ENCODE measurements at regions of chr2 and their contacts with region 1.

Region 1: DNA sequence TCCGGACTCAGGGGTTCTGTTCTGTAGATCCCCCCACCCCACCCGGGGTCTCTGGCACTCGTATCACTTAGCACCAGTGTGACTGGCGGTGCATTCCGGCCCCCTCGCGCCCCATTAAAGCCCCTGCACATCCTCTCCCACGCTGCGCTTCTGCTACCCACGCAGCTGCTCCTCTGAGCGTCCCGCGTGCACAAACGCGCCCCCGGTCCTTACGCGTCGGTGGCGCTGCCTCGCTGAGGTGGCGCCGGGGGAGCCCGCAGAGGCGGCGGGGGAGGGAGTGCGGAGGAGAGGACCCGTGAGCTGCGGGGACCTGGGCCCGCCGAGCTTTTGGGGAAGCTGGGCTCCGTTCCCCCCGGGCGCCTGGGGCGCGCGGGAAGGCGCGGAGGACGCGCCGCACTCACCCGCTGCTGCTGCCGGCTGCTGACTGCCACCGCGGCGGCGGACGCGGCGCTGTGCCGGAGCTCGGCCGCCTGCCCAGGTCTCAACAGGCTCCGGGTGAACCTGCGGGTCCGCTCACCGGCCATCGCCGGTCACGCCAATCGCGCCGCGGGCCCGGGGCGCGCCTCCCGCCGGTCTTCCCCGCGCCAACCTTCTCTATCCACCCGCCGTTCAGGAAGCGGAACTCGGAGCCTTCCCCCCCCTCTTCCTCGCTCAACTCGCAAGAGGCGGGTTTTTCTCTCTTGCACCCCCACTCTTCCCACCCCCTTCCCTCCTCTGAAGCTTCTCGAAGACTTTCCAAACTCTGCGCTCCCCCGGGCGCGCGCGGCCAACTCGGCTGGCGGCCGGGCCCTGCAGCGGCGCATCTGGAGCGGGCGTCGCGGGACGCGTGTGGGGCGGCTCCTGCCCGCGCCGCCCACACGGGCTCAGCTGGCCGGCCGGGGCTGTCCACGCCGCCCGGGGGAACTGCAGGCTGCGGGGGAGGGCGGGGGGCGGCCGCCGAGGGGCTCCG is at the start of gene DOCK10:
- DNase-seq: peak; percentile 29
- H3K4me3 ChIP-seq: peak within 1 kb of the TSS; percentile 57 to 66 (median 58)
- H3K27ac ChIP-seq: no peak within 1 kb of the TSS
- H3K4me1 ChIP-seq: peaks cover 7% of the 10 kb centered on the region
- H3K27me3 ChIP-seq: peaks cover 4% of the 10 kb centered on the region
- CTCF ChIP-seq: no peak
- total RNA-seq, gene DOCK10: 0.50 to 5.1 TPM

Region 2: GRCh38 chr2:224832207-224832606 is 209.9 kb before region 1 on chr2:
- CTCF ChIA-PET with region 1: no interaction called
- dilution Hi-C with region 1: no loop called
- in situ Hi-C with region 1: no loop called
- intact Hi-C with region 1: no loop called
- DNase-seq: no peak
- H3K4me3 ChIP-seq: no peak overlapping the region
- H3K27ac ChIP-seq: no peak overlapping the region
- H3K4me1 ChIP-seq: peaks cover 3% of the 10 kb centered on the region
- H3K27me3 ChIP-seq: no peaks in the 10 kb centered on the region
- CTCF ChIP-seq: no peak

Region 3: GRCh38 chr2:225002039-225002655 is 40.0 kb before region 1 on chr2:
- CTCF ChIA-PET with region 1: no interaction called
- dilution Hi-C with region 1: no loop called
- in situ Hi-C with region 1: no loop called
- intact Hi-C with region 1: no loop called
- DNase-seq: peak; percentile 61
- H3K4me3 ChIP-seq: no peak overlapping the region
- H3K27ac ChIP-seq: no peak overlapping the region
- H3K4me1 ChIP-seq: peaks cover 15% of the 10 kb centered on the region
- H3K27me3 ChIP-seq: no peaks in the 10 kb centered on the region
- CTCF ChIP-seq: peak; percentile 82 to 87

Region 4: DNA sequence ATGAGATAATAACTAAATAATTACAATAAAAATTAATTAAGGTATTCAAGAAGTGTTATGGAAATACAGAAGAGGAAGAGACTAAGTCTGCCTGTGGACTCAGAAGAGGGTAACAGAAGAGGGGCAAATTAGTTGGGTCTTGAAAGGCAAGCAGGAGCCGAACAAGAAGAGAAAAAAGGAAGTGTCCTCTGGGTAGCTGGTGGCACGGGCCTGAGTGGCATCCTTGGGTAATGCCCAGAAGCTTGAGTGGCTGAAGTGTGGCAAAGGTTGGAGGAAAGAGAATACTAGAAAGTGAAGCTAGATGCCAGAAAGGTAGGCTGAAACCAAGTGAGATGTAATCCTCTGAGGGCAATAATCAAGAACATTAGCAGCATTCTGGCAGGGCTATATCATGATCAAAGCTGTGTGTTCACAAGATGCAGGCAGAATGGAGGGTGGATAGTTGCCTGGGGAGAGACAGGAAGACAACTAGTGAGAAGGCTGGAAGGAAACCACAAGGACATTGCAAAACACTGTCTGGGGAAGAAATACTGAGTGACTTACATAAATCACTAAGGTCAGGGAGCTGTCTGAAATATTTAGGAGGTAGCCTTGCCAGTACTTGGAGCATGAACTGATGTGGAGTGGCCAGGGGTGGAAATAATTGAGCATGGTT is 16.1 kb before region 1 on chr2:
- CTCF ChIA-PET with region 1: no interaction called
- dilution Hi-C with region 1: no loop called
- in situ Hi-C with region 1: no loop called
- intact Hi-C with region 1: no loop called
- DNase-seq: peak; percentile 71
- H3K4me3 ChIP-seq: no peak overlapping the region
- H3K27ac ChIP-seq: no peak overlapping the region
- H3K4me1 ChIP-seq: peaks cover 9% of the 10 kb centered on the region
- H3K27me3 ChIP-seq: no peaks in the 10 kb centered on the region
- CTCF ChIP-seq: no peak

Region 5: DNA sequence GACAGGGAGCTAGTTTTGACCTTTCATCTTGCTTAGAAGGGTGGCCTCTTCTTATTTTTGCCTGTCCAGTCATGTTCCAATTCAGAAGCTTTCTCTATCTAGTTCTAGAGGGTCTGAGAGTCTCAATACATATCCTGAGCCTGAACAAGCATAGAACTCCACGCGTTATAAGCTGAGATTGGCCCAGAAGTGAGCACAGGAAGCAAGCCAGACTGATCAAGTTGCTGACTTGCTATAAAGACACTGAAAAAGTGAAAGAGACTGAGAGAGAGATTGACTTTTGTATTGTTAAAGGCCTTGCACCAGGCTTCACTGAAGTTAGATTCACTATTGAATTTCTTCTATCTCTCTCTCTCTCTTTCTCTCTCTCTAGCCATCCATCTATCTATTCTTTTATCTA is 142.8 kb after region 1 on chr2:
- CTCF ChIA-PET with region 1: no interaction called
- dilution Hi-C with region 1: loop called (anchors 5 kb)
- in situ Hi-C with region 1: no loop called
- intact Hi-C with region 1: no loop called
- DNase-seq: no peak
- H3K4me3 ChIP-seq: no peak overlapping the region
- H3K27ac ChIP-seq: no peak overlapping the region
- H3K4me1 ChIP-seq: no peaks in the 10 kb centered on the region
- H3K27me3 ChIP-seq: no peaks in the 10 kb centered on the region
- CTCF ChIP-seq: no peak